Calu3 (cell line): ENCODE measurements at regions of chr3 and their contacts with region 1.

Region 1: GRCh38 chr3:185733980-185734724 is 90.7 kb downstream of the IGF2BP2 start:
- DNase-seq: peak; percentile 82
- H3K4me3 Mint-ChIP-seq: no peak overlapping the region
- H3K27ac Mint-ChIP-seq: peak overlapping the region; percentile 28
- H3K4me1 Mint-ChIP-seq: peaks cover 52% of the 10 kb centered on the region
- H3K27me3 Mint-ChIP-seq: no peaks in the 10 kb centered on the region
- CTCF ChIP-seq: peak; percentile 92

Region 2: DNA sequence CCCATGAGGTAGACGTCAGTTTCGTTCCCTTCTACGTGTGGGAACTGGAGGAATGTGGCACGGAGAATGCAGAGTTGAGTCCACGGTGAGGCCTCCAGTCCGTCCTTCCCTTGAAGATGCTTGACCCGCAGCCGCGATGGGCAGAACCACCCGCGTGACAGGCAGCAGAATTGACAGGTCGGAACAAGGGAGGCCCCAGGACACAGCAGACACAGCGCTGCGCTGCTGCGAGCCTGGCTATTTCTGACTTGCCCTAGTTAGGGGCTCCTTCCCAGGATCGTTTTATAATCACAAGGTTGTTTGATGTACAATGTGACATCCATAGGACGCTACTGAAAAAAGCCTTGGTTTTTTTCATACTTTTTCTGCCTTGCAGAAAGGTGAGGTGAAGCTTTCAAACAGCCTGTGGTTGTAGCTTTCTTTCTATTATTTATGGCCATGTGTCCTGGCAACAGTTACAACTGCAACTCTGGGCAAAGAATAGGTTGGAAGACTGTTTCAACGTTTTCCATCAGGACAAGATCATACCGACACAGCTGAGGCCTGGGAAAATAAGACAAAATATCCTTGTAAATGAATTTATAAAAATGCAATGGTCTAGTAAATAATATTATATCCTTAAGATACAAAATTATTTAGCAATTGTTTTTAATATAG is 225.7 kb before region 1 on chr3:
- CTCF ChIA-PET with region 1: no interaction called
- intact Hi-C with region 1: no loop called
- DNase-seq: no peak
- H3K4me3 Mint-ChIP-seq: no peak overlapping the region
- H3K27ac Mint-ChIP-seq: peak overlapping the region; percentile 10
- H3K4me1 Mint-ChIP-seq: peaks cover 2% of the 10 kb centered on the region
- H3K27me3 Mint-ChIP-seq: no peaks in the 10 kb centered on the region
- CTCF ChIP-seq: no peak

Region 3: DNA sequence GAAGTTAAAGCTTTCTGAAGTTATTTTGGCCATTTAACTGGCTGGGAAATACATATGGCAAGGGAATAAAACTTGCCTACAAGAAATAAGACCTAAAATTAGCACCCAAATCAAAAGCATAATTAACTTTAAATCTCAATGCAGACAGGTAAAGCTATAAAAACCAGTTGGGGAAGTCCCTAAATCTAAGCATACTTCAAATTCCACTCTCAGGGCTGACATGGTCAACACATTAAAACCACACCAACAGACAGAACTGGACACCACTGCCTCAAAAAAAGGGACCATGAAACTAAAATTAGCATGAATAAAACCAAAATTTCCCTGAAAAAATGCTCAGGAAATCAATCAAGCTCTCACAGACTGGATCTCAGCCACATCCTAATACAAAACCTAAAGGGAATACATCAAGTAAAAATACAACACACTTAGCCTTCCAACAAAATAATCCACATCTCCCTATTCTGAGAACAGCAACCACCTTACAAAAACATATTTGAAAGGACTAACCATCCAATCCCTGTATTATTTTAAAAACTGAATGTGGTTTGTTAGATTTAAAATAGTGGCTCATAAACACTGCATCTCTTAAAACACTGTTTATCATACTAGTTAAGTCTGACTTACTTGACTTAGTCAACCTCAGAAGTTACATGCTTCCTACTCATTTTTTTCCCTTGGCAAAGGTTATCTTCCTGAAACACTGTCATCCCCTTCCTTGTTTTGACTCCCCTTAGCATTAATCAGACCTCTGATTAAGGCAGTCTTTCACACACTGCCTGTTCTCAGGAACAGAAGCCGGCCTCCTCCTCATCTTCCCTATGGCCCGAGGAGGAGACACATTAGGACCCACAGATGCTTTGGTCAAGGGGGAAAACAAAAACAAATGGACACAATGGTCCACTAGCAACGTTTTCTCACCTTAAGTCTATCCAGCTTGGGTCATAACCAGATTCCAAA is 195.3 kb after region 1 on chr3:
- CTCF ChIA-PET with region 1: no interaction called
- intact Hi-C with region 1: loop called (anchors 5 kb)
- DNase-seq: no peak
- H3K4me3 Mint-ChIP-seq: peak overlapping the region; percentile 95
- H3K27ac Mint-ChIP-seq: peak overlapping the region; percentile 41
- H3K4me1 Mint-ChIP-seq: peaks cover 89% of the 10 kb centered on the region
- H3K27me3 Mint-ChIP-seq: no peaks in the 10 kb centered on the region
- CTCF ChIP-seq: no peak

Region 4: GRCh38 chr3:186121968-186122367 is 387.8 kb after region 1 on chr3:
- CTCF ChIA-PET with region 1: no interaction called
- intact Hi-C with region 1: no loop called
- DNase-seq: peak; percentile 18
- H3K4me3 Mint-ChIP-seq: no peak overlapping the region
- H3K27ac Mint-ChIP-seq: no peak overlapping the region
- H3K4me1 Mint-ChIP-seq: no peaks in the 10 kb centered on the region
- H3K27me3 Mint-ChIP-seq: peaks cover 53% of the 10 kb centered on the region
- CTCF ChIP-seq: no peak